Heart right ventricle (tissue), 16 donors: ENCODE measurements at regions of chr7 and their contacts with region 1.

Region 1: DNA sequence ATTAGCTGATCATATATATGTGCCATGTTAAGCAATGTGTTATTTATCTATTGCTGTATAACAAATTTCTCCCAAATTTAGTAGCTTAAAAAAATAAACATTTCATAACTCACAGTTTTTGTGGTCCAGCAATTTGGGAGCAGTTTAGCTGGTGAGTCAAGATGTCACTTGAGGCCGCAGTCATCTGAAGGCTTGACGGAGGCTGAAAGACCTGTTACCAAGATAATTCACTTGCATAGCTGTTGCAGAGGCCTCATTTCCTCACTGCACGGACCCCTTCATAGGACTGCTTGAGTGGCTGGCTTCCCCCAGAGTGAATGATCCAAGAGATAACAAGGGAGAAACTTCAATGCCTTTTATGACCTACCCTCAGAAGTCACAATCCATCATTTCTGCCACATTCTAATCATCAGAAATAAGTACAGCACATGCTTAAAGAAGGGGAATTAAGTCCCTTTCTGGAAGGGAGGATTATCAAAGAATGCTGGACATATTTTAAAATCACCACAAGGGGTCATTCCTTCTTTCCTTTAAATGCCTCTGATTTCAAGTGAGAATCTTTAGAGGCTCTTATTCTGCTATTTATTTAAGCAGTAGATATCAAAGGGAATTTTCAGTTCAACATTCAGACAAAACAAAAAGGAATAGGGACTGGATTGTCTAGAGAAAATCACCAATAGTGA is 10.5 kb upstream of the SRPK2 start:
- DNase-seq: no peak
- ATAC-seq: no peak
- H3K4me3 ChIP-seq: no peak overlapping the region
- H3K27ac ChIP-seq: no peak overlapping the region
- H3K4me1 ChIP-seq: peaks cover 0 to 15% (median 0%) of the 10 kb centered on the region in 9 donors
- H3K27me3 ChIP-seq: no peaks in the 10 kb centered on the region
- CTCF ChIP-seq: peak in 4 of 9 donors; percentile 10 to 30 (median 22)

Region 2: GRCh38 chr7:105487579-105488571 is 88.7 kb after region 1 on chr7:
- intact Hi-C with region 1: loop called in 1 of 10 experiments (anchors 10 kb)
- DNase-seq: peak in 1 of 2 donors; percentile 17
- ATAC-seq: peak; percentile 73 to 92 (median 82)
- H3K4me3 ChIP-seq: no peak overlapping the region
- H3K27ac ChIP-seq: peak overlapping the region in 6 of 10 donors; percentile 11 to 60 (median 46)
- H3K4me1 ChIP-seq: peaks cover 0 to 16% (median 9%) of the 10 kb centered on the region in 9 donors
- H3K27me3 ChIP-seq: no peaks in the 10 kb centered on the region
- CTCF ChIP-seq: peak in 8 of 9 donors; percentile 16 to 64 (median 49)